Activated CD4-positive, alpha-beta T cell treated with anti-CD3 and anti-CD28 coated beads, Interleukin-2, amount 10 ng/mL, durations not matched to agents 7 days and 5 days (primary cell): ENCODE measurements at regions of chr11 and their contacts with region 1.

Region 1: GRCh38 chr11:73647459-73648100 is 1.2 kb downstream of the PLEKHB1 start:
- DNase-seq: peak; percentile 92
- H3K4me3 Mint-ChIP-seq: peak overlapping the region; percentile 73
- H3K27ac Mint-ChIP-seq: peak overlapping the region; percentile 60
- H3K4me1 Mint-ChIP-seq: peaks cover 20% of the 10 kb centered on the region
- H3K27me3 Mint-ChIP-seq: no peaks in the 10 kb centered on the region

Region 2: GRCh38 chr11:73633999-73634398 is 13.6 kb before region 1 on chr11:
- CTCF ChIA-PET with region 1: interaction called, 14 read pairs
- POLR2A ChIA-PET with region 1: no interaction called
- DNase-seq: no peak
- H3K4me3 Mint-ChIP-seq: no peak overlapping the region
- H3K27ac Mint-ChIP-seq: peak overlapping the region; percentile 20
- H3K4me1 Mint-ChIP-seq: peaks cover 7% of the 10 kb centered on the region
- H3K27me3 Mint-ChIP-seq: no peaks in the 10 kb centered on the region